ENCODE measurements at regions of chr10 and their contacts with region 1.

Region 1: GRCh38 chr10:62816331-62817120 is at the start of gene EGR2:
- DNase-seq: peak; percentile 67
- ATAC-seq: peak; percentile 90
- H3K4me3 ChIP-seq: peak within 1 kb of the TSS; percentile 68 to 87
- H3K27ac ChIP-seq: no peak within 1 kb of the TSS
- H3K4me1 ChIP-seq: peaks cover 11% of the 10 kb centered on the region
- H3K27me3 ChIP-seq: peaks cover 37% of the 10 kb centered on the region
- CTCF ChIP-seq: no peak
- total RNA-seq, gene EGR2: 0.82 TPM

Region 2: GRCh38 chr10:62268399-62269114 is 548.0 kb before region 1 on chr10 and contains the start of gene RTKN2:
- CTCF ChIA-PET with region 1: no interaction called
- POLR2A ChIA-PET with region 1: no interaction called
- in situ Hi-C with region 1: no loop called
- intact Hi-C with region 1: loop called (anchors 10 kb)
- DNase-seq: no peak
- ATAC-seq: peak; percentile 93
- H3K4me3 ChIP-seq: peak within 1 kb of the TSS; percentile 77 to 98
- H3K27ac ChIP-seq: peak within 1 kb of the TSS; percentile 92
- H3K4me1 ChIP-seq: peaks cover 47% of the 10 kb centered on the region
- H3K27me3 ChIP-seq: no peaks in the 10 kb centered on the region
- CTCF ChIP-seq: no peak
- total RNA-seq, gene RTKN2: 21.3 TPM

Region 3: GRCh38 chr10:62437696-62438095 is 378.8 kb before region 1 on chr10:
- CTCF ChIA-PET with region 1: interaction called, 4 read pairs
- POLR2A ChIA-PET with region 1: no interaction called
- in situ Hi-C with region 1: no loop called
- intact Hi-C with region 1: loop called (anchors 5 kb)
- DNase-seq: no peak
- ATAC-seq: peak; percentile 82
- H3K4me3 ChIP-seq: no peak overlapping the region
- H3K27ac ChIP-seq: no peak overlapping the region
- H3K4me1 ChIP-seq: peaks cover 11% of the 10 kb centered on the region
- H3K27me3 ChIP-seq: no peaks in the 10 kb centered on the region
- CTCF ChIP-seq: peak; percentile 86

Region 4: GRCh38 chr10:62594093-62594520 is 222.4 kb before region 1 on chr10:
- CTCF ChIA-PET with region 1: interaction called, 15 read pairs
- POLR2A ChIA-PET with region 1: no interaction called
- in situ Hi-C with region 1: no loop called
- intact Hi-C with region 1: loop called (anchors 2 kb)
- DNase-seq: peak; percentile 58
- ATAC-seq: peak; percentile 93
- H3K4me3 ChIP-seq: no peak overlapping the region
- H3K27ac ChIP-seq: no peak overlapping the region
- H3K4me1 ChIP-seq: no peaks in the 10 kb centered on the region
- H3K27me3 ChIP-seq: no peaks in the 10 kb centered on the region; the same call in 1 of the 2 replicates
- CTCF ChIP-seq: peak; percentile 97

Region 5: GRCh38 chr10:62653254-62653653 is 163.3 kb before region 1 on chr10:
- CTCF ChIA-PET with region 1: interaction called, 10 read pairs
- POLR2A ChIA-PET with region 1: no interaction called
- in situ Hi-C with region 1: no loop called
- intact Hi-C with region 1: no loop called
- DNase-seq: no peak
- ATAC-seq: no peak
- H3K4me3 ChIP-seq: no peak overlapping the region
- H3K27ac ChIP-seq: no peak overlapping the region
- H3K4me1 ChIP-seq: no peaks in the 10 kb centered on the region
- H3K27me3 ChIP-seq: no peaks in the 10 kb centered on the region
- CTCF ChIP-seq: no peak

Region 6: DNA sequence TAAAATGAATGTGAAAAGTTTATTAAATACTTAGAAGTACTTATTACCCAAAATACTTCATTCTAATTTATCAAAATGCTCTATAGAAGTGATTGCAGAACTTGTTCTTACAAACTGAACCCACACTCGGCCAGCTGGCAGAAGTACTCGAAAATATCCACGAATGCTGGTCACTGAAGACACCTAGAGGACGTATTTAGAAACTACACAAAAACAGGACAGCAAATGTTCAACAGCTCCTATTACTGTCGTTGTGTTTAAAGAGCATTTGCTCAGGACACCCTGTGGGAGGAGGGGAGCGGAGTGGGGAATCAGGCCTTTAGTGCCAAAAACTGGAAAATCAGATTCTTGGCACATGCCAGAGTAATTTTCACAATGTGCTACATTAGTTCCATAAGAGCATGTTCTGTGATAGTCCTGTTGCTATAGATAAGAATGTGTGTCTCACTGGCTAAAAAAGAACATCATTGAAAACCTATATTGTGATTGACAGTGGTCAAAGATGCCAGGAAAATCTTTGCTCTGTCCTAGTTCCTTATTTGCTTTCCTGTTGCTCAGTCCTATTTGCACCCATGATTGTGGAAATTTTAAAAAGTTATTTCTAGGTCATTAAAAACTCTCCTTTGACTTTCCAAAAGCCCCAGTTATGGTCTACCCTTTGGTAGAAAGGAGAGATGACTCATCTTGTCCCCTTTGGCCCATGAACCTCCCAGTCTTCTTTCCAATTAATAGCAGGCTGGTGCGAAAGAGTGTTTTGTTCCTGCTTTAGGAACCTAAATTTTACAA is 267.6 kb after region 1 on chr10:
- CTCF ChIA-PET with region 1: interaction called, 3 read pairs
- POLR2A ChIA-PET with region 1: no interaction called
- in situ Hi-C with region 1: no loop called
- intact Hi-C with region 1: loop called (anchors 5 kb)
- DNase-seq: peak; percentile 77
- ATAC-seq: peak; percentile 92
- H3K4me3 ChIP-seq: no peak overlapping the region
- H3K27ac ChIP-seq: no peak overlapping the region
- H3K4me1 ChIP-seq: no peaks in the 10 kb centered on the region
- H3K27me3 ChIP-seq: peaks cover 4% of the 10 kb centered on the region; the same call in 1 of the 2 replicates
- CTCF ChIP-seq: peak; percentile 86

Region 7: DNA sequence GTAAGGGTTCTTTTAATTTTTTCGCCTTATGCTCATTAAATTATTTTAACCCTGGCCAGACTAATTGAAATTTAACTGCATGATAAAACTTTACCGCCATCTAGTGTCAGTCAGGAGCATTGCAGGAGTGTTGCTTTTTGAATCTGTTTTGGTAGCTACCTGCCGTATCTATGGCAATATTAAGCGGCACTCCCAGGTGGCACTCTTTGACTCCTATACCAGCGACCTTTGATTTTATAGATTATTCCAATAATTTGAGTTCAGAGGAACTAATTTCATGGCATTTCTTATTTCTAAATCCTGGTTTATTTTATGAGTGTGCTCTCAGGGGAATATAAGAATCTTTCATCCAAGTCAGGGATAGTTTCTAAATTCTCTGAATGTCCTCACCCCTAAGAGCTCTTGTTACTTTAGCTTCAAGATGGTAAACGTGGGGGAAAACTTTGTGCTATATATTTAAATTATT is 903.6 kb after region 1 on chr10:
- CTCF ChIA-PET with region 1: interaction called, 10 read pairs
- POLR2A ChIA-PET with region 1: no interaction called
- in situ Hi-C with region 1: no loop called
- intact Hi-C with region 1: no loop called
- DNase-seq: no peak
- ATAC-seq: peak; percentile 56; the same call in 1 of the 2 replicates
- H3K4me3 ChIP-seq: no peak overlapping the region
- H3K27ac ChIP-seq: no peak overlapping the region
- H3K4me1 ChIP-seq: peaks cover 29% of the 10 kb centered on the region
- H3K27me3 ChIP-seq: no peaks in the 10 kb centered on the region; the same call in 1 of the 2 replicates
- CTCF ChIP-seq: peak; percentile 97

Measured in Panc1 (cell line).